CD14-positive monocyte (primary cell): ENCODE measurements at regions of chrX and their contacts with region 1.

Region 1: DNA sequence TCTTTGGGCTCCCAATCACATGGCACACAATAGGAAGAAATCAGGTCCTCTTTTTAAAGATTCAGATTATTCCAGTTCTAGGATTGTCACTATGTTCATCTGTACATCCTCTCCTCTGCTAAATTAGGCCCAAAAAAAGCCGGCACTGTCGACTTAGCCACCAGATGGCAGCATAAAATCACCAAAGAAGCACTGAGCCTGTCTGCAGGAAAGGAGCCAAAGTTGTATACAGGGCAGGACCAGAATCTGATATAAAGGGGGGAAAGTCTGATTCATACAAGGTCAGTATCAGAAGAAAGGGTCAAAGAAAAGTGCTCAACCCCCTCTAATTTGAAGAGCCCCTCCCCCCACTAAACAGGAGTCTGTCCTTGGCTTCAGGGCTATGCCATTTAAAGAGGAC is 292.5 kb downstream of the CHIC1 start:
- DNase-seq: peak; percentile 23 to 48 (median 37)
- H3K4me3 ChIP-seq: no peak overlapping the region
- H3K4me3 Mint-ChIP-seq: no peak overlapping the region
- H3K27ac ChIP-seq: no peak overlapping the region
- H3K27ac Mint-ChIP-seq: no peak overlapping the region
- H3K4me1 ChIP-seq: no peaks in the 10 kb centered on the region
- H3K4me1 Mint-ChIP-seq: no peaks in the 10 kb centered on the region
- H3K27me3 ChIP-seq: no peaks in the 10 kb centered on the region
- H3K27me3 Mint-ChIP-seq: peaks cover 0 to 20% (median 0%) of the 10 kb centered on the region in 3 donors
- CTCF ChIP-seq: peak; percentile 47

Region 2: GRCh38 chrX:74015379-74016019 is 160.0 kb after region 1 on chrX:
- intact Hi-C with region 1: loop called (anchors 5 kb)
- DNase-seq: peak; percentile 49 to 71 (median 55)
- H3K4me3 ChIP-seq: no peak overlapping the region
- H3K4me3 Mint-ChIP-seq: no peak overlapping the region
- H3K27ac ChIP-seq: no peak overlapping the region
- H3K27ac Mint-ChIP-seq: no peak overlapping the region
- H3K4me1 ChIP-seq: no peaks in the 10 kb centered on the region
- H3K4me1 Mint-ChIP-seq: no peaks in the 10 kb centered on the region
- H3K27me3 ChIP-seq: no peaks in the 10 kb centered on the region
- H3K27me3 Mint-ChIP-seq: peaks cover 0 to 1% (median 0%) of the 10 kb centered on the region in 3 donors
- CTCF ChIP-seq: peak; percentile 66

Region 3: DNA sequence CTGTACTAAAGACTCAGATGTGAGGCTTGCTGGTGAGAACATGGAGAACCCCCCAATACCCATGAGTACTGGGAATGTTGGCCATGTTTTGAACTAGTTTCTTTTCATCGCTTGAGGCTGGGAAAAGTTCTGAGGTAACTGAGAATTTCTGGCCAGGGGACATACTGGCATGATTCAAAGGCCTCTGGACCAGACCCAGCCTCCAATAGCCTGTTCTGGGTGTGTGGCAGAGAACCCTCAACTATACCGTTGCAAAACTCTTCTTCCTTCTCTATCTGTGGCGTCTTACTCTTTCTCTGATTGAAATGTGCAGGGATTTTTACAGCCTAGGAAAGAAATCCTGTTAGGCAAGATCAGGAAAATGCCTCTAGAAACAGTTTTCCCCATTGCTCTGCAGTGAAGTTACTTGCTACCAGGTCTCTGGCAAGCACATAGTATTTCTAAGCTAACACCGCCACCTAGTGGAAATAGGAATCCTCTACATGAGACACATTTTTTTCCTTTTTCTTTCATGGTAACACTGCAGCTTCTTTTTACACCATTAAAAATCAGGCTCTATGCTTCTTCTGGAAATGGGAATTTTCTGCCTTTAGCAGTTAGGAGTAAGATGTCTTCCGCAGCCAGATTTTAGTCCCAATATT is 277.7 kb after region 1 on chrX:
- intact Hi-C with region 1: loop called (anchors 5 to 10 kb)
- DNase-seq: peak; percentile 30 to 44 (median 33)
- H3K4me3 ChIP-seq: no peak overlapping the region
- H3K4me3 Mint-ChIP-seq: no peak overlapping the region
- H3K27ac ChIP-seq: no peak overlapping the region
- H3K27ac Mint-ChIP-seq: no peak overlapping the region
- H3K4me1 ChIP-seq: no peaks in the 10 kb centered on the region
- H3K4me1 Mint-ChIP-seq: no peaks in the 10 kb centered on the region
- H3K27me3 ChIP-seq: peaks cover 0 to 3% of the 10 kb centered on the region in 2 donors
- H3K27me3 Mint-ChIP-seq: peaks cover 0 to 4% (median 0%) of the 10 kb centered on the region in 3 donors
- CTCF ChIP-seq: peak; percentile 54